AG04449 (cell line): ENCODE measurements at regions of chr9 and their contacts with region 1.

Region 1: GRCh38 chr9:137223078-137223970 is 1.3 kb upstream of the RNF208 start:
- DNase-seq: peak; percentile 80
- H3K4me3 ChIP-seq: peak overlapping the region; percentile 87
- CTCF ChIP-seq: no peak

Region 2: DNA sequence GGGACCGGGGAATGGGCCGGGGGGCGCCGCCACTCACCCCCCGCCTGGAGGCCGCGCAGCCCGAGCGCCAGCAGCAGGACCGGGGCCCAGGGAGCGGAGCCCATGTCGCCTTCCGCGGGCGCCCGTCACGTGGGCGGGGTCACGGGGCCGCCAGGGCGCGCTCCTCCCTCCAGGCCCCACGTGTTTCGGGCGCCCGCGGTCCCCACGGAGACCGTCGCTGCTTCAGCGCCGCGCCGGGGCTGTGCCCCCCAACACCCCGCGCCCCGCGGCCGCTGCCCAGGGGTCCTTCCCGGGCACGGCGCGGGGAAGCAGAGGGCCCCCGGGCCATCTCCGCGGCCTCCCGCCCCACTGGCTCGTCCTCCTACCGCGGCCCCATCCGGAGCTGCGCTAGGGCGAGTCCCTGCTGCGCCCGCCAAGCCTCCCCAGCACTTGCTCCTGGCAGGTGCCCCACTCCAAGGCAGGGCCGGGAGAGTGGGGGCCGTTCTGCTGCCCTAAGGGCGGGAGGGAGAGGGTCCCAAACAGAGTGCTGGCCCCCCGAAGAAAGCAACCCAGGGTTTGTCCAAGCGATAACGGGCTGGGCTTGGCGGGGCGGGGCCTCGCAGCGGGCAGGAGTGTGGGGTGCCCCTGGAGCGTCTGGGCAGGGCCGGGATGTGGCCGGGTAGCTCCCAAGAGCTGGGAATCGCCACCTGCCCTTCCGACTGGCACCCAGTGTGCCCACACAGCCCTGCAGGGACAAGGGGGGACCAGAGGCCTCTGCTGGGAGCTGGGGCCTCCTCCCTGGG is 108.5 kb before region 1 on chr9 and contains the start of gene DPP7:
- CTCF ChIA-PET with region 1: interaction called, 16 read pairs
- POLR2A ChIA-PET with region 1: interaction called, 4 read pairs
- DNase-seq: no peak
- H3K4me3 ChIP-seq: peak within 1 kb of the TSS; percentile 59
- CTCF ChIP-seq: no peak

Region 3: GRCh38 chr9:137123468-137123837 is 99.9 kb before region 1 on chr9:
- CTCF ChIA-PET with region 1: interaction called, 28 read pairs
- POLR2A ChIA-PET with region 1: no interaction called
- DNase-seq: no peak
- H3K4me3 ChIP-seq: no peak overlapping the region
- CTCF ChIP-seq: no peak

Region 4: DNA sequence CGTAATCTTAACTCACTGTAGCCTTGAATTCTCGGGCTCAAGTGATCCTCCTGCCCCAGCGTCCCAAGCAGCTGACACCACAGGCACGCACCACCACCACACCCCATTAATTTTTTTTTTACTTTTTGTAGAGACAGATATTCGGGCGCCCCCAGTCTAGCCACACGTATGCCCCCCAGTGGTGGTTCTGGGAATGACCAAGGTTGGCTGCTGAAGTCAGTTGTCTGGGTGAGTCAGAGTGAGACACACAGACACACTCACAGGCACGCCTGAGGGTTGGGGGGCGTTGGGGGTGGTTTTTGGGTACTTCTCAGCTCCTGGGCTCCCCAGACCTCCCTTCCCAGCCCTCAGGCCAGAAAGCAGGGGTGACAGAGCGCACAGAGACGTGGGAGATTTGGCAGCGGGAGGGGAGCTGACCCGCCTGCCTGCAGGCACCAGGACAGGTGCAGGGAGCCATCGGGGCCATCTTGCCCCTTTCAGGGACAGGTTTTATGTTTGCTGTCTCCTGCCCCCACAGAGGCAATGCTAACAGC is 222.0 kb after region 1 on chr9:
- CTCF ChIA-PET with region 1: no interaction called
- POLR2A ChIA-PET with region 1: no interaction called
- DNase-seq: no peak
- H3K4me3 ChIP-seq: no peak overlapping the region
- CTCF ChIP-seq: peak; percentile 78